ENCODE measurements at regions of chr3 and their contacts with region 1.

Region 1: GRCh38 chr3:5304789-5305683 is 117.5 kb downstream of the EDEM1 start:
- DNase-seq: peak; percentile 55 to 76
- H3K4me3 ChIP-seq: no peak overlapping the region
- H3K4me3 Mint-ChIP-seq: peak overlapping the region; percentile 16
- H3K27ac Mint-ChIP-seq: peak overlapping the region; percentile 58
- H3K4me1 ChIP-seq: peaks cover 27% of the 10 kb centered on the region
- H3K4me1 Mint-ChIP-seq: peaks cover 18% of the 10 kb centered on the region
- H3K27me3 ChIP-seq: no peaks in the 10 kb centered on the region
- H3K27me3 Mint-ChIP-seq: no peaks in the 10 kb centered on the region
- CTCF ChIP-seq: peak; percentile 69 to 81

Region 2: GRCh38 chr3:5136211-5136918 is 168.7 kb before region 1 on chr3:
- CTCF ChIA-PET with region 1: no interaction called
- POLR2A ChIA-PET with region 1: no interaction called
- intact Hi-C with region 1: loop called (anchors 5 kb)
- DNase-seq: peak in 1 of 2 experiments; percentile 37
- H3K4me3 ChIP-seq: no peak overlapping the region
- H3K4me3 Mint-ChIP-seq: no peak overlapping the region
- H3K27ac Mint-ChIP-seq: no peak overlapping the region
- H3K4me1 ChIP-seq: peaks cover 19% of the 10 kb centered on the region
- H3K4me1 Mint-ChIP-seq: peaks cover 18% of the 10 kb centered on the region
- H3K27me3 ChIP-seq: no peaks in the 10 kb centered on the region
- H3K27me3 Mint-ChIP-seq: no peaks in the 10 kb centered on the region
- CTCF ChIP-seq: peak; percentile 18 to 62

Region 3: DNA sequence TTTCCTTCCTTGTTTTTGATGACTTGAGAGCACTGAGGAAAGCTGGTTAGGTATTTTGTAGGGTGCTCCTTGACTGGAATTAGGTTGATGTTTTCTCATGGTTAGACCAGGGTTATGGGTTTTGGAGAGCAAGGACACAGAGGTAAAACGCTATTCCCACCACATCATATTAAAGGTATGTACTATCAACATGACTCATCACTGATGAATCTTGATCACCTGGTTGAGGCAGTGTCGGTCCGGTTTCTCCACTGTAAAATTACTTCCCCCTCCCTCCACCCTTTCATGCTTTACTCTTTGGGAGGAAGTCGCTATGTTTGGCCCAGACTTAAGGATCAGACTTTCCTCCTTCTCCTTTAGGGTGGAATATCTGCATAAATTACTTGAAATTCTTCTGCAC is 84.0 kb after region 1 on chr3:
- CTCF ChIA-PET with region 1: no interaction called
- POLR2A ChIA-PET with region 1: no interaction called
- intact Hi-C with region 1: loop called (anchors 2 kb)
- DNase-seq: peak; percentile 75 to 77
- H3K4me3 ChIP-seq: no peak overlapping the region
- H3K4me3 Mint-ChIP-seq: no peak overlapping the region
- H3K27ac Mint-ChIP-seq: peak overlapping the region; percentile 78
- H3K4me1 ChIP-seq: peaks cover 34% of the 10 kb centered on the region
- H3K4me1 Mint-ChIP-seq: peaks cover 22% of the 10 kb centered on the region
- H3K27me3 ChIP-seq: no peaks in the 10 kb centered on the region
- H3K27me3 Mint-ChIP-seq: no peaks in the 10 kb centered on the region
- CTCF ChIP-seq: no peak

Region 4: GRCh38 chr3:5568458-5568857 is 263.4 kb after region 1 on chr3:
- CTCF ChIA-PET with region 1: no interaction called
- POLR2A ChIA-PET with region 1: no interaction called
- intact Hi-C with region 1: loop called (anchors 1 kb)
- DNase-seq: peak in 1 of 2 experiments; percentile 37
- H3K4me3 ChIP-seq: no peak overlapping the region
- H3K4me3 Mint-ChIP-seq: no peak overlapping the region
- H3K27ac Mint-ChIP-seq: no peak overlapping the region
- H3K4me1 ChIP-seq: no peaks in the 10 kb centered on the region
- H3K4me1 Mint-ChIP-seq: no peaks in the 10 kb centered on the region
- H3K27me3 ChIP-seq: no peaks in the 10 kb centered on the region
- H3K27me3 Mint-ChIP-seq: no peaks in the 10 kb centered on the region
- CTCF ChIP-seq: peak in 1 of 2 experiments; percentile 34

Region 5: GRCh38 chr3:5787861-5788488 is 482.9 kb after region 1 on chr3:
- CTCF ChIA-PET with region 1: no interaction called
- POLR2A ChIA-PET with region 1: no interaction called
- intact Hi-C with region 1: loop called (anchors 5 kb)
- DNase-seq: peak in 1 of 2 experiments; percentile 23
- H3K4me3 ChIP-seq: no peak overlapping the region
- H3K4me3 Mint-ChIP-seq: no peak overlapping the region
- H3K27ac Mint-ChIP-seq: no peak overlapping the region
- H3K4me1 ChIP-seq: no peaks in the 10 kb centered on the region
- H3K4me1 Mint-ChIP-seq: no peaks in the 10 kb centered on the region
- H3K27me3 ChIP-seq: no peaks in the 10 kb centered on the region
- H3K27me3 Mint-ChIP-seq: no peaks in the 10 kb centered on the region
- CTCF ChIP-seq: peak in 1 of 2 experiments; percentile 43

Region 6: DNA sequence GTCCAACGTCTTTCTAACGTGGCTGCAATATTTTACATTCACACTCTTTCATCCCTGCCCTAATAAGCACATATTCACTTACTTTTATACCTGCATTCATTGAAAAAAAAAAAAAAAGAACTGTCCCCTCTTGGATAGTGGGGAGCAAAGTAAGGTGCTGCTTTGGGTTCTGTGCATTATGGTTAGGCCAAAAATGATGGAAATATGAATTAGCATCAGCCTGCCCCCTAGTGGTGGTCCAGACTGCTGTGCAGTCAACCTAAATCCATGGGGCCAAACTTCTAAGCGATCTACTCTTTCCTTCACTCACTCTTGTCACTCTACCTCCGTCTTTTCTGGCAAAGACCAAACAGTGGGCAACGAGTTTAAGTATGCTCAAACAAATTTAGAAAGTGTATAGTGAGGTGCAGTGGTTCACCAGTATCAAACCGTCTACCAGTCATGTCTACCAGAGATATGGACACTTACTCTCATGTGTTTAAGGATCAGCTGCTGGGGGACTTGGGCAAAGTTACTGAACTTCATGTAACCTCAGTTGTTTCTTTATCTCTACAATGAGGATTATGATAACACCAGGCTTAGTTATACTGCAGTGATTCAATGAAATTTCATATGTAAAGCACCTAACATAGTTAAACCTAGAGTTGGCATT is 1494.4 kb after region 1 on chr3:
- CTCF ChIA-PET with region 1: no interaction called
- POLR2A ChIA-PET with region 1: no interaction called
- intact Hi-C with region 1: loop called (anchors 1 kb)
- DNase-seq: peak; percentile 31 to 54
- H3K4me3 ChIP-seq: no peak overlapping the region
- H3K4me3 Mint-ChIP-seq: no peak overlapping the region
- H3K27ac Mint-ChIP-seq: no peak overlapping the region
- H3K4me1 ChIP-seq: no peaks in the 10 kb centered on the region
- H3K4me1 Mint-ChIP-seq: no peaks in the 10 kb centered on the region
- H3K27me3 ChIP-seq: no peaks in the 10 kb centered on the region
- H3K27me3 Mint-ChIP-seq: no peaks in the 10 kb centered on the region
- CTCF ChIP-seq: peak; percentile 80 to 81

Measured in Caco-2 (cell line).